ENCODE measurements at regions of chr2 and their contacts with region 1.

Region 1: GRCh38 chr2:228522276-228522675 is 340.8 kb upstream of the SPHKAP start:
- DNase-seq: no peak
- H3K4me3 ChIP-seq: no peak overlapping the region
- H3K27ac ChIP-seq: no peak overlapping the region
- H3K4me1 ChIP-seq: no peaks in the 10 kb centered on the region
- H3K27me3 ChIP-seq: no peaks in the 10 kb centered on the region
- CTCF ChIP-seq: no peak
- EP300 ChIP-seq: no peak
- POLR2A ChIP-seq: no peak

Region 2: DNA sequence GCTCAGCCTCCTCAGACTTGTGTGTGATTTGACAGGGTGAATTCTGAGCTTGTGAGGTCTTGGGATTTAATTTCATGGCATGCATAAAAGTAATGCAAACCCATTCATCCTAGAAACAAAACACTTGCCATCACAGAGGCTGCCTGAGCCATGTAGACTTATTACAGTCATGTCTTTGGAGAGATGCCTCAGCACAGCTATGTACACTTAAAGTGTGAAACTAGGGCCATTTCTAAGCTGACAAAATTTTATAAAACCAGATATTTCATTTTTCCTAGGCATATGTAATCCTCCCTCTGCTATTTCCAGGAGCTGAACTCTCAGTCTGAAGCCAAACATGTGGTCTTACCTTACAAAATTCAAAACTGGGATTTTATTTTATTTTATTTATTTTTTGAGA is 18.5 kb before region 1 on chr2:
- in situ Hi-C with region 1: no loop called
- intact Hi-C with region 1: no loop called
- DNase-seq: no peak
- H3K4me3 ChIP-seq: no peak overlapping the region
- H3K27ac ChIP-seq: no peak overlapping the region
- H3K4me1 ChIP-seq: no peaks in the 10 kb centered on the region
- H3K27me3 ChIP-seq: no peaks in the 10 kb centered on the region
- CTCF ChIP-seq: no peak
- EP300 ChIP-seq: no peak
- POLR2A ChIP-seq: no peak

Region 3: DNA sequence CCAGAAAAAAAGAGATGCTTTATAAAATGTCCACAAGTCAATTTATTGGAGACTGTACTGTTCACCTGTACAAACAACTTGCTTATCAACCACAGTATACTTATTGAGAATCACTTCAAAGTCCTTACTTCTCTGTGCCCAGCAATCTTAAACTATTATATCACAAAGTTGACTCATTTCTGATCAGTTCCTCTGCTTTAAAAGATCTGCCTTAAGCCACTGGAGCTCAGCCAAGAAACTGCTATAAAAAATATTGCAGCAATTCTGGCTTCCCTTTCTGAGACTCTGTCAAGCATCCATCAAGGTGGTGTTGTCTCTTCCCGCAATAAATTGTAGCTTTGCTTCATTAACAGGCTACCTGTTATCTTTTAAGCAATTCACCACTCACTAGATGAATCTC is 34.4 kb after region 1 on chr2:
- in situ Hi-C with region 1: no loop called
- intact Hi-C with region 1: no loop called
- DNase-seq: peak; percentile 28
- H3K4me3 ChIP-seq: no peak overlapping the region
- H3K27ac ChIP-seq: no peak overlapping the region
- H3K4me1 ChIP-seq: no peaks in the 10 kb centered on the region
- H3K27me3 ChIP-seq: no peaks in the 10 kb centered on the region
- CTCF ChIP-seq: no peak
- EP300 ChIP-seq: no peak
- POLR2A ChIP-seq: no peak

Region 4: DNA sequence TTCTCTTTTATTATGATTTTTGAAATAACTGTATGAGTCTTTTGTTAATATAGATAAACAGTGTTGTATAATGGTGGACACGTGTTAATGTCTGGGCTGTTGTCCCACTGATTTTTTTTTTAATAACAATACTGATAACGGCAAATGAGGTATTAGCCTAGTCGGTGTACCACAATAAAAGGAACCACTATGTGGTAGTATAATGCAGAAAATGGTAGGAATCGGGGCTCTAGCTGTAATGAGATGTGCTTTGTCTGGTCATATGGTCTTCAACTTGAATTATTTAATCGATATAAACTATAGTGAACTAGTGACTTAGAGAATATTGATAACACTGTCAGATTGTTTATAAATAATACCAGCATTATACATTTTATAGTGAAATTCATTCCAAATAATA is 177.1 kb after region 1 on chr2:
- in situ Hi-C with region 1: no loop called
- intact Hi-C with region 1: loop called (anchors 5 kb)
- DNase-seq: no peak
- H3K4me3 ChIP-seq: no peak overlapping the region
- H3K27ac ChIP-seq: no peak overlapping the region
- H3K4me1 ChIP-seq: no peaks in the 10 kb centered on the region
- H3K27me3 ChIP-seq: no peaks in the 10 kb centered on the region
- CTCF ChIP-seq: no peak
- EP300 ChIP-seq: no peak
- POLR2A ChIP-seq: no peak